ENCODE measurements at regions of chr20 and their contacts with region 1.

Region 1: DNA sequence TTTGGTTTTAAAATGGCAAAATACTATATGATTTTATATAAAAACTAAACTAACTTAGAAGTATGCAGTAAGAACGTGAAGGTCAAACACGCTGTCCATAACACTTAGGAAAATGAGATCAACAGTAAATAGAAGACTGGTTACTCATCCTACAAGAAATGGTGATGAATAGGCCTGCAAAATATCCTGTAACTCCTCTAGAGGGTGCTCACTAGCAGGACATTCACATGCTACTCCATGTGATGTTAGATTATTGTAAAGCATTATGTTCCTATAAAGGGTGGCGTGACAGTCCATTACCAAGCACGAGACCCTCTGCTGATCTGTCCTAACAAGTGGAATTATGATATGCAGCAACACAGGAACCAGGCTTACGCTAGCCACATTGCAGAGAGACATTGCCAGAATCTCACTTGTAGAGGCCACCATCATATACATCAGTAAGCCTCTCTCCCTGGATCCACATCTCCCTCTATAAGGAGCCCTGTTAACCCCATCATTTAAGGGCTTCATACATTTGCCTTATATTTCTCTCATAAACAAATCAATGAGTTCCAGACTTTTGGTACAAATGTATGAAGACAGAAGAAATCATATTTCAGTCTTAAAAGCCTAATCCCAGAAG is 18.0 kb upstream of the DEFB129 start:
- DNase-seq: peak; percentile 45
- H3K4me3 ChIP-seq: no peak overlapping the region
- H3K27ac ChIP-seq: no peak overlapping the region
- H3K27me3 ChIP-seq: no peaks in the 10 kb centered on the region
- CTCF ChIP-seq: peak; percentile 70

Region 2: DNA sequence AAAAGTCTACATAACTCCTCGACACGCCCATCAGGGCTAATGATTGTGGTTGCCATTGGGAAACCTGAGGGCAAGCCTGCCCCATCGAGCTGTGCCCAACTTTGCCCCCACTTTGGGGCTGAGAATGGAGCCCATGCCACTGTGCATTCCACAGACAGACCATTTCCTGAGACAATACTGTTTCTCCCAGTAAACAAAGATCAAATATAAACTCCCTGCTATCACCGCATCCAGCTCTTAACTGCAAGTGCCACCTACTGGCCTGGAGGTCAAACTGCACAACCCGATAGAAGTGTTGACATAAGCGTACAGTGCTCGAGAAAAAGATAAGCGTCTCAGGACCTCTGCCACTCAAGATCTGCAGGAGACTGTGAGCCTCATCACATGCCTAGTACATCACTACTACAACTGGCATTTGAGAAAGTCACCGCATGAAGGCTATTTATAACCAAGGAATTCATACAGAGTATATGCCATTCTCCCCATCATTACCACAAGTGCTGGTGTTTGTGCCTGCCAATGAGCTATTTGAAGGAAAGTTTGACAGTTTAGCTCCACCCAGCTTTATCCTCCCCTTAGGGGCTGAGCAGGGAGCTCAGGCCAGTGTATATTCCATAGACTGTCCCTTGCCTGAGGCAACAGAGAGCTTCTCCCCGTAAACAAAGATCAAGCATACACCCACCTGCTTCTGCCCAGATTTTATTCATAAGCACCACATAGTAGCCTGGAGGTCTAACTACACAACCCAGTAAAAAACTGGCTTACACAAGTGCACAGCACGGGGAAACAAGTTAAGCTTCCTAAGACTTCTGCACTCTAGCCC is 71.2 kb before region 1 on chr20:
- CTCF ChIA-PET with region 1: interaction called, 14 read pairs
- POLR2A ChIA-PET with region 1: no interaction called
- DNase-seq: no peak
- H3K4me3 ChIP-seq: no peak overlapping the region
- H3K27ac ChIP-seq: no peak overlapping the region
- H3K27me3 ChIP-seq: no peaks in the 10 kb centered on the region
- CTCF ChIP-seq: no peak

Region 3: GRCh38 chr20:266596-267562 is 57.8 kb after region 1 on chr20:
- CTCF ChIA-PET with region 1: interaction called, 10 read pairs
- POLR2A ChIA-PET with region 1: no interaction called
- DNase-seq: peak; percentile 33
- H3K4me3 ChIP-seq: peak overlapping the region; percentile 70
- H3K27ac ChIP-seq: no peak overlapping the region
- H3K27me3 ChIP-seq: peaks cover 13% of the 10 kb centered on the region
- CTCF ChIP-seq: peak; percentile 93